ENCODE measurements at regions of chr9 and their contacts with region 1.

Region 1: DNA sequence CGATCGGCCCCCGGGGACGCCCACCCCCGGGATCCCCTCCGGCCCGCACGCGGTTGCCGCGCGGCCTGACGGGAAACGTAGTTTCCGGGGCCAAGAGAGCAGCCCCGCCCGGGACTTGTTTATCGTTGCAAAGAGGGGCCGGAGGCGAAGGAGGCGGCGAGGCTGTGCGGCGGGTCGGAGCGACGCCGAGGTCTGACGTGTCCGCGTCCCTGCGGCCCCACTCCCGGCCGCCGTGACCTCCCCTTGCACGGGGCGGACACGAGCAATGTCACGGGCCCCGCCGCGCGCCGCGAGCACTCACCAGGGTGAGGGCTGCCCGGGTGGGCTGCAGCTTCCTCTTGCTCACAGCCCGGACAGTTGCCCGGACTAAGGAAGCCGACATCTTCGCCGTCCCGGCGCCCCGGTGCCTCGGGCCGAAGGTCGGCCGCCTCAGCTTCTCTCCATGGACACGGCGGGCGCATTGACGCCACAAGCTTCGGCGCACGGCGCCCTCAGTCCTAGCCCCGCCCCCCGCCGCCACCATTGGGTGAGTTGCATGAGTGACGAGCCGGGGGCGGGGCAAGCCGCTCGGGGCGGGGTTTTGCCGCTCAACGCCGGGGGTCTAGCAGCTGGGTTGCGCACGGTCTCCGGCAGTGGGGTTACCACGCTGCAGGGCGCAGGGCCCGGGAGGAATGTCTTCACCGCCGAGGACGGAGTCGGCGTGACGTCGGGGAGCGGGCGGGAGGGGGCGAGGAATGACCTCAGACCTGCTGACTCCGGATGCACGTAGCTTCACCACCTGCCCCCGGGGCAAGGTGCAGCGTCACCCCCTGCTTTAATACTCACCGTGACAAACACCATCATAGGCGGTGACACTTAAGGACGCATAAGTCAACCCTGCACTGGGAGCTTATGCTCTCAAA is at the start of gene ISCA1:
- H3K4me3 Mint-ChIP-seq: peak within 1 kb of the TSS; percentile 92
- H3K27ac Mint-ChIP-seq: peak within 1 kb of the TSS; percentile 91
- H3K4me1 Mint-ChIP-seq: peaks cover 62% of the 10 kb centered on the region
- H3K27me3 Mint-ChIP-seq: peaks cover 3% of the 10 kb centered on the region

Region 2: DNA sequence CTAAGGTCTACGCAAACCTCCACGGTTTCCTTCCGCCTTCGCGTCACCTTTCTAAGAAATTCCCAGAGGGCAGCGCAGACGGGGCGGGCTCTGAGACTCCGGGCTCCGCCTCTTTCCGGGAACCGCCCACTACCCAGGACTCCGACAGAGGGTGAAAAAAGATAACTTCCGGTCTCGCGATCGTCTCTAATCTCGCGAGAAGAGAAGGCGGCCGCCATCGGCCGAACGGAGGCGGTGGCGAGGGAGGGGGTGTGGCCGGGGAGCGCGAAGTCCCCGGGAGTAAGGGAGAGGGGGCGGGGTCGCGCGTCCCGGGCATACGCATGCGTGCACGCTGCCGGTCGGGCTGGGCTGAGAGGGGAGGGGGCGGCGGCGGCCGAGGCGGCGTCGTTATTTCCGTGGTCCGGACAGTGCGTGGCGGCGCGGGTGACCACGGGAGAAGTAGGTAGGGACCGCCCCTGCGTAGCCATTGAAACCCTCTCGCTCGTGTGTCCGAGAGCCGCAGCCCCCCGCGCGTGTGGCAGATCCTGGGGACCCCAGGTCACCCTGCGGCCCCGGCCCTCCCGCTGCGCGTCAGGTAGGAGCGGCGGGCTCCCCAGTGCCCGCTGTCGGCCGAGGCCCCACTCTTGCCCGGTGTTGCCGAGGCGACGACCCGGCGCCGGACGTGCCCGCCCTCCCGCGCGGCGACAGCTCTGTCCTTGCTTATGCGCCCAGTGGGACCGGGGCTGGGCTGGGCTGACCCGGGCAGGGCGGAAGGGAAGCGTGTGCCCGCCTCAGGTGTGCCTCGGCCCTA is 341.3 kb before region 1 on chr9 and contains the start of gene NAA35:
- intact Hi-C with region 1: loop called (anchors 5 kb)
- H3K4me3 Mint-ChIP-seq: peak within 1 kb of the TSS; percentile 92
- H3K27ac Mint-ChIP-seq: peak within 1 kb of the TSS; percentile 85
- H3K4me1 Mint-ChIP-seq: peaks cover 6% of the 10 kb centered on the region
- H3K27me3 Mint-ChIP-seq: no peaks in the 10 kb centered on the region